WTC11 (cell line): ENCODE measurements at regions of chr11 and their contacts with region 1.

Region 1: DNA sequence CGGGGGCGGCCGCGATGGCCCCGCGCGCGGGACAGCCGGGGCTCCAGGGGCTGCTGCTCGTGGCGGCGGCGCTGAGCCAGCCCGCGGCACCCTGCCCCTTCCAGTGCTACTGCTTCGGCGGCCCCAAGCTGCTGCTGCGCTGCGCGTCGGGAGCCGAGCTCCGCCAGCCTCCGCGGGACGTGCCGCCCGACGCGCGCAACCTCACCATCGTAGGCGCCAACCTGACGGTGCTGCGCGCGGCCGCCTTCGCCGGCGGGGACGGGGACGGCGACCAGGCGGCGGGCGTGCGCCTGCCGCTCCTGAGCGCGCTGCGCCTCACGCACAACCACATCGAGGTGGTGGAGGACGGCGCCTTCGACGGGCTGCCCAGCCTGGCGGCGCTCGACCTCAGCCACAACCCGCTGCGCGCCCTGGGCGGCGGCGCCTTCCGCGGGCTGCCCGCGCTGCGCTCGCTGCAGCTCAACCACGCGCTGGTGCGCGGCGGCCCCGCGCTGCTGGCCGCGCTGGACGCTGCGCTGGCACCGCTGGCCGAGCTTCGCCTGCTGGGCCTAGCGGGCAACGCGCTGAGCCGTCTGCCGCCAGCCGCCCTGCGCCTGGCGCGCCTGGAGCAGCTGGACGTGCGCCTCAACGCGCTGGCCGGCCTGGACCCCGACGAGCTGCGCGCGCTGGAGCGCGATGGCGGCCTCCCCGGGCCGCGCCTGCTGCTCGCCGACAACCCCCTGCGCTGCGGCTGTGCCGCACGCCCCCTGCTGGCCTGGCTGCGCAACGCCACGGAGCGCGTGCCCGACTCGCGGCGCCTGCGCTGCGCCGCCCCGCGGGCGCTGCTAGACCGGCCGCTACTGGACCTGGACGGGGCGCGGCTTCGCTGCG is 697 bp downstream of the TPBGL start:
- DNase-seq: peak; percentile 89
- ATAC-seq: peak; percentile 74
- H3K4me3 Mint-ChIP-seq: peak overlapping the region; percentile 53
- H3K27ac Mint-ChIP-seq: no peak overlapping the region
- H3K4me1 Mint-ChIP-seq: peaks cover 19% of the 10 kb centered on the region
- H3K27me3 Mint-ChIP-seq: peaks cover 75% of the 10 kb centered on the region
- CTCF ChIP-seq: peak; percentile 90

Region 2: GRCh38 chr11:74929431-74930363 is 311.6 kb before region 1 on chr11:
- CTCF ChIA-PET with region 1: interaction called, 16 read pairs
- POLR2A ChIA-PET with region 1: no interaction called
- DNase-seq: peak; percentile 53
- ATAC-seq: peak; percentile 95
- H3K4me3 Mint-ChIP-seq: no peak overlapping the region
- H3K27ac Mint-ChIP-seq: no peak overlapping the region
- H3K4me1 Mint-ChIP-seq: no peaks in the 10 kb centered on the region
- H3K27me3 Mint-ChIP-seq: no peaks in the 10 kb centered on the region
- CTCF ChIP-seq: peak; percentile 56; the same call in 1 of the 2 replicates

Region 3: GRCh38 chr11:75022759-75023396 is 218.4 kb before region 1 on chr11:
- CTCF ChIA-PET with region 1: interaction called, 14 read pairs
- POLR2A ChIA-PET with region 1: no interaction called
- DNase-seq: peak; percentile 91
- ATAC-seq: peak; percentile 99
- H3K4me3 Mint-ChIP-seq: no peak overlapping the region
- H3K27ac Mint-ChIP-seq: no peak overlapping the region
- H3K4me1 Mint-ChIP-seq: no peaks in the 10 kb centered on the region
- H3K27me3 Mint-ChIP-seq: peaks cover 4% of the 10 kb centered on the region
- CTCF ChIP-seq: peak; percentile 97

Region 4: GRCh38 chr11:75031771-75032549 is 209.3 kb before region 1 on chr11:
- CTCF ChIA-PET with region 1: interaction called, 11 read pairs
- POLR2A ChIA-PET with region 1: no interaction called
- DNase-seq: peak; percentile 89
- ATAC-seq: peak; percentile 91
- H3K4me3 Mint-ChIP-seq: no peak overlapping the region
- H3K27ac Mint-ChIP-seq: no peak overlapping the region
- H3K4me1 Mint-ChIP-seq: 0 out of 2 replicates have a peak, but pooled peaks cover 5% of the 10 kb centered on the region
- H3K27me3 Mint-ChIP-seq: no peaks in the 10 kb centered on the region; the same call in 1 of the 2 replicates
- CTCF ChIP-seq: peak; percentile 82

Region 5: GRCh38 chr11:75096456-75097172 is 144.7 kb before region 1 on chr11 and contains the start of gene OR2AT4:
- CTCF ChIA-PET with region 1: no interaction called
- POLR2A ChIA-PET with region 1: no interaction called
- DNase-seq: no peak
- ATAC-seq: no peak
- H3K4me3 Mint-ChIP-seq: no peak within 1 kb of the TSS
- H3K27ac Mint-ChIP-seq: no peak within 1 kb of the TSS
- H3K4me1 Mint-ChIP-seq: peaks cover 9% of the 10 kb centered on the region
- H3K27me3 Mint-ChIP-seq: peaks cover 12% of the 10 kb centered on the region; the same call in 1 of the 2 replicates
- CTCF ChIP-seq: no peak
- total RNA-seq, gene OR2AT4: 0.02 TPM in 1 of 3 replicates, not detected in the others

Region 6: DNA sequence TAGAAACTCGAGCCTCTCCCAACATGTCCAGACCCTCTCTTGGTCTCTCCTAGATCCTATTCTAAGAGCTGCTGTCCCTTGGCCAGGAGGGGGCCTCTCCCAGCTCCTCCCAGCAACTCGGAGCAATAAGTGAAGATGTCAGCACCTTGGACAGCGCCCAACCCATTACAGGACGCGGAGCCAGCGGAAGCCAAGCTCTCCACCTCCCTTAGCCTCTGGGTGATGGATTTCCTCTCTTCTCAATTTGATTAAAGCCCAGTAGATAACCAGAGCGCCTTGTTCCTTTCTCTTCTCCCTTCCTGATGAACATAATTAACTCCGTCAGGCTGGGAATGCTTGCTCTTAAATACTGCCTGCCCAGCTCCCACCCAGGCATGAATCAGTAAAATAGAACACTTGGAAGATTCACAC is 26.9 kb before region 1 on chr11:
- CTCF ChIA-PET with region 1: interaction called, 70 read pairs
- POLR2A ChIA-PET with region 1: no interaction called
- DNase-seq: peak; percentile 97
- ATAC-seq: peak; percentile 99
- H3K4me3 Mint-ChIP-seq: no peak overlapping the region
- H3K27ac Mint-ChIP-seq: no peak overlapping the region
- H3K4me1 Mint-ChIP-seq: no peaks in the 10 kb centered on the region
- H3K27me3 Mint-ChIP-seq: peaks cover 53% of the 10 kb centered on the region
- CTCF ChIP-seq: no peak

Region 7: DNA sequence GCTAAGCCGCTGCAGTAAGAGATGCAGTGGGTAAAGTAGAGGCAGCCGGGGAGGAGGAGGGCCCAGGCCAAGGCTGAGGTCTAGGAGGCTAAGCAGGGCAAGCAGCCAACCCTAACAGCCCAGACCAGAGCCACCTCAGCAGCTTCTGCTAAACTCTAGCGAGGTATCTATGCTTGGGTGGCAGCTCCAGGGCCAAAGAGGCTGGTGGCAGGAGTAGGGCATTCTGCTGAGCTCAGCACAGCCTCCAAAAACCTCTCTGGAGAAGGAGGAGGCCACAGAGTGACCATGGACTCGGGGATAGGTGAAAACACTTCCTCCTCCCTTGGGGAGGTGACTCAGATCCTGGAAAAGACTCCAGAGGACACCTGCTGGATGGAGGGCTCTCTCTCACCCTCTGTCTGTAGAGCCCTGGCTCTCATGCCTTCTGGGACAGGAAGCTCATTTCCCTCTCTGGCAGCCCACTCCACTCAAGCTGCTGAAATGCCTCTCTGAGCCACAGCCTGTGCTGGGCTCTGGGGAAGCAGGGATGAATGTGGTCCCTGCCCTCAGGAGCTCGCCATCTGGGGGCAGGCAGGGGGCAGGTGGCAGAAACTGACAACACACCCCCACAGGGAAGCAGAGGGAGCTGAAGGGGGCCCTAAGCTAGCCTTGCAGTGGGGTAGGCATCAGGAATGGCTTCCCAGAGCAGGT is 17.2 kb before region 1 on chr11:
- CTCF ChIA-PET with region 1: interaction called, 46 read pairs
- POLR2A ChIA-PET with region 1: interaction called, 3 read pairs
- DNase-seq: no peak
- ATAC-seq: peak; percentile 85
- H3K4me3 Mint-ChIP-seq: no peak overlapping the region
- H3K27ac Mint-ChIP-seq: no peak overlapping the region
- H3K4me1 Mint-ChIP-seq: peaks cover 7% of the 10 kb centered on the region; the same call in 1 of the 2 replicates
- H3K27me3 Mint-ChIP-seq: peaks cover under 1% of the 10 kb centered on the region; the same call in 1 of the 2 replicates
- CTCF ChIP-seq: no peak

Region 8: DNA sequence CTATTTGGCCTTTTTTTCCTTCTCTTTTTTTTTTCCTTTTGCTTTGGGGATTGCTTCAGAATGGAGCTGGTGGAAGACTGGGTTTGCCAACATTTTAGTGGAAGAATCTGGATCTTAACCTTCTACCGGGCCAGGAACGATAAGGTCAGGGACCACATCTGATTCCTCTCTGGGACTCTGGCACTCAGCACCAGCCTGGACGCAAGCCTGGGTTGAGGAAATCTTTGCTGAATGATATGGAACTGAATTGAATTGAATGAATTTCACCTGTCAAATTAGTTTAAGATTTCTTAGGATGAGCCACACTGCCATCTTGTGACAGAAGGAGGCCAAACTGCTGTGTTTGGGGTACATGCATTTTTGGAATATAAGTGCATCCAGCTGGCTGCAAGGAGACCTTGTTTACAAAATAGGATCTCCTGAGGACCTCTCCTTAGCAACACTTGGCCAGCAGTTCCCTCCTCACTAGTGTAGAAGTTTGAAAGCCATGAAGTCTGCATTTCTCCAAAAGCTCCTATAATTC is 29.7 kb after region 1 on chr11:
- CTCF ChIA-PET with region 1: interaction called, 14 read pairs
- POLR2A ChIA-PET with region 1: no interaction called
- DNase-seq: no peak
- ATAC-seq: peak; percentile 19; the same call in 1 of the 2 replicates
- H3K4me3 Mint-ChIP-seq: no peak overlapping the region
- H3K27ac Mint-ChIP-seq: 0 out of 2 replicates have a peak overlapping the region, but pooled peaks have one; percentile 75
- H3K4me1 Mint-ChIP-seq: peaks cover 12% of the 10 kb centered on the region
- H3K27me3 Mint-ChIP-seq: no peaks in the 10 kb centered on the region
- CTCF ChIP-seq: no peak